GM10248 (cell line): ENCODE measurements at regions of chr10 and their contacts with region 1.

Region 1: DNA sequence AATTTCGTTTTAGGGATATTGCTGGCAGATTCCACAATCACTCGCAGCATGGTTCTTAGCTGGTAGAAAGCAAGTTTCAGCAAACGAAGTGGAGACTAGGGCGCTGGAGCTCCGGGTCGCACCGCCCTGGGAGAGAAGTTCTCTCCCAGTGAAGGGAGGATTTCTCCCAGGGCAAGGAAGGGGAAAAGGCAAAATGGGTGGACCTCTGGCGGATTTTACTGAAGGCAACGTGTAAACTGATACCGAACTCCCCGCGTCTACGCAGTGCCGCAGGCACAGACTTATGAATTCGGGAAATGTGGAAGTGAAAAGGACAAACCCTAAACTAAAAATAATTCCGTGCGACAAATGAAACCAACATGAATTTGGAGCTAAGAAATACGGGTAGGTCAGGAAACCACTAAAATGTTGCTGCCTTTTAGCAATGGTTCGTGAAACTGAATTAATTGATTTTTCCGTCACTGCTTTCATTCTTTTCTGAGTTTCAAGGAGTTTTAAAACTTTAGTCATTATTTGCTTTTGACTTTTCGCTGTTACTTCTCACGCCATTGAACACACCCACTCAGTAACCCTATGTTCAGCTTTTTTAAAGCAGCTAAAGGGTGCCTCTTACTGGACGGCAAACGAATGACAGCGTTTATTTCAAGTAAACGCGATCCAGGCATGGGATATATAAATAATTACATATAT is at the start of gene MYOF:
- DNase-seq: peak; percentile 70
- CTCF ChIP-seq: peak; percentile 63

Region 2: DNA sequence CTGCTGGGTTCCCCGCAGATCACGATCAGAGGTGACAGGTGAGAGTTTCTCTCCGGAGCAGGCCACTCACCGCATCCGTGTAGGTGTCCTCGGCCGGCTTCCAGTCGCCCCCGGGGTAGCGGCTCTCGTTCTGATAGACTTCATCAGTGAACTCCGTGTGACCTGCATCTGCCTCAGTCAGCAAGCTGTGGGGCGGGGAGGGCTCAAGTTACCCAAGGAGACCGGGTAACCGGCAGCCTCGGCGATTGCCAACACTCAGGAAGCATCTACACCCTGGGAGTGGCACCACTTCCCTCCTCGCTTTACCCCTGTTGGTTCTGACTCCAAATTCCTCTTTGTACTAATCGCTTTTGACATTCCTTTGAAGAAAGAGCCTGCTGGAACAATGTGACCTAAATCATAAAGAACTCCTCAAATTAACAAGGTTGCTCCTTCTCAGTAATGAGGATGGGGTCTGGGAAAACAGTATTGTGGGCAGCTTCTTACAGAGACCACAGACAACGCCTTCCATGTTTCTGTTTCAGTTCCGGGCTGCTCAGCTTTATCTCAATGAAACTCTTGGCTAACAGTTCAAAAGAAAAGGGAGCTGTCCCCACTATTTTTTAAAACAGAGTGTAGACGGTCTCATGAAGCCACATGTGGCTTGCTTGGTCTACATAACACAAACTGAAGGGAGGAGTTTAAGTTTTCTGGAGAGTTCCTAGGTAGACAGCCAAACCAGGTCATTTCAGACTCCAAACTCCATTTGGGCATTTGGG is 118.2 kb before region 1 on chr10:
- CTCF ChIA-PET with region 1: interaction called, 17 read pairs
- POLR2A ChIA-PET with region 1: no interaction called
- DNase-seq: no peak
- CTCF ChIP-seq: no peak

Region 3: DNA sequence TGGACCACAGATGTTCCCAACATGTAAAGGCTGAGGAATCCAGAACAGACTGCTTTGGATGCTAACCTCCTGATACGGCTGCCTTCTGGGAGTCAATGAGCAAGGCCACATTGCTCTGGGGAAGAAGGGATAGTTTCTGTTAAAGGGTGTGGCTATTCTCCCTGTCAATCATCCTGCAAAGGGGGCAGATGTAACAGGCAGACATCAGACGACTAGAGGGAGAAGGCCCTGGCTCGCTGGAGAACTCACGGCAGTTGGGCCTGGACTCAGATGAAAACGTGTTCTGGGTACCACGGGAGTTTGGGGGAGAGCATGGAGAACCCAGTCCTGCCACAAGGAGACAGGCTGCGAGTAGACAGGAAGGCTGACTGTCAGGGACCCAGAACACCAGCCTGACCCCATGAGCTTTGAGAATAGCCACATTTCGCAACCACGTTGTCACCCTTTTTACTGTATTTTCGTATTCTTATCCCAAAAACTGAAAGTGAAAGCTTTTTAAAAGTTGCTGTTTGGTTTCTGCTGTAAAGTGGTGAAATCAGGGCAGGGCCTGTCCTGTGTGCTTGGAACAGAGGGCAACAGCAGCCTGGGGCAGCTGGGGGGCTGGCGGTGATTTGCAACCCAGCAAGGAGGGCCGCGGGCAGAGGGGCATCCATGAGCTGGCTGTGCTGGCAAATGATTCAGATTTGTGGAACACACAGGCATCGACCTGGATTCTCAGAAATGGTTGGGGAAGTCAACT is 95.5 kb before region 1 on chr10:
- CTCF ChIA-PET with region 1: interaction called, 18 read pairs
- POLR2A ChIA-PET with region 1: no interaction called
- DNase-seq: peak; percentile 21
- CTCF ChIP-seq: no peak

Region 4: GRCh38 chr10:93471110-93471651 is 11.1 kb before region 1 on chr10:
- CTCF ChIA-PET with region 1: interaction called, 39 read pairs
- POLR2A ChIA-PET with region 1: no interaction called
- DNase-seq: no peak
- CTCF ChIP-seq: no peak

Region 5: DNA sequence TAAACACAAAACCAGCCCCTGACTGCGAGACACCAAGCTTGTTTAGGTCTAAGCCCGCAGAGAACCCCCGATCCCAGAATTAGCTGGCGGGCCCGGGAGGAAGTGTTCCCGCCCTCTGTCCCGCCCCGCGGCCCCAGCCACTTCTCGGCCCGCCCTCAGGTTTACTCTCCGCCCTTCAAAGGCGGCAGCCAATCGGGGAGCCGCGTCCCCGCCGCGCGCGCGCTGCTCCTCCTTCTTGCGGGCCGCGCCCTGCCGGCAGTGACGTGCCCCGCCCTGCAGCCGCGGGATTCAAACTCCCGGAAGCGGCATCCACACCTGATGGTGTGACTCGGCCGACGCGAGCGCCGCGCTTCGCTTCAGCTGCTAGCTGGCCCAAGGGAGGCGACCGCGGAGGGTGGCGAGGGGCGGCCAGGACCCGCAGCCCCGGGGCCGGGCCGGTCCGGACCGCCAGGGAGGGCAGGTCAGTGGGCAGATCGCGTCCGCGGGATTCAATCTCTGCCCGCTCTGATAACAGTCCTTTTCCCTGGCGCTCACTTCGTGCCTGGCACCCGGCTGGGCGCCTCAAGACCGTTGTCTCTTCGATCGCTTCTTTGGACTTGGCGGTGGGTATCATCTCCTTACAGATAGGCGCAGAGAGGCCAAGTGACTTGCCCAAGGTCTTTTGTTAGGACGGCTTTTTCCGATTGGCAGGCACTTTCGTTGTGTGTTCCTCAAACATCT is 14.2 kb after region 1 on chr10 and contains the start of gene CEP55:
- CTCF ChIA-PET with region 1: interaction called, 24 read pairs
- POLR2A ChIA-PET with region 1: no interaction called
- DNase-seq: peak; percentile 96
- CTCF ChIP-seq: no peak

Region 6: DNA sequence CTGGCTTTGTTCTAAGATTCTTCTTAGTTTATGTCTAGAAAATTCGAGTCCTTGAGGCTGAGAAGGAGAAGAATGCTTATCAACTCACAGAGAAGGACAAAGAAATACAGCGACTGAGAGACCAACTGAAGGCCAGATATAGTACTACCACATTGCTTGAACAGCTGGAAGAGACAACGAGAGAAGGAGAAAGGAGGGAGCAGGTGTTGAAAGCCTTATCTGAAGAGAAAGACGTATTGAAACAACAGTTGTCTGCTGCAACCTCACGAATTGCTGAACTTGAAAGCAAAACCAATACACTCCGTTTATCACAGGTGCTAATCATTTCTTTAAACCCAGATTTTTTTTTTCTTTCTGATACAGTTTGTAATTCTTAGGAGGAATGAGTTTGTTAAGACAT is 20.8 kb after region 1 on chr10:
- CTCF ChIA-PET with region 1: interaction called, 38 read pairs
- POLR2A ChIA-PET with region 1: no interaction called
- DNase-seq: peak; percentile 25
- CTCF ChIP-seq: no peak

Region 7: DNA sequence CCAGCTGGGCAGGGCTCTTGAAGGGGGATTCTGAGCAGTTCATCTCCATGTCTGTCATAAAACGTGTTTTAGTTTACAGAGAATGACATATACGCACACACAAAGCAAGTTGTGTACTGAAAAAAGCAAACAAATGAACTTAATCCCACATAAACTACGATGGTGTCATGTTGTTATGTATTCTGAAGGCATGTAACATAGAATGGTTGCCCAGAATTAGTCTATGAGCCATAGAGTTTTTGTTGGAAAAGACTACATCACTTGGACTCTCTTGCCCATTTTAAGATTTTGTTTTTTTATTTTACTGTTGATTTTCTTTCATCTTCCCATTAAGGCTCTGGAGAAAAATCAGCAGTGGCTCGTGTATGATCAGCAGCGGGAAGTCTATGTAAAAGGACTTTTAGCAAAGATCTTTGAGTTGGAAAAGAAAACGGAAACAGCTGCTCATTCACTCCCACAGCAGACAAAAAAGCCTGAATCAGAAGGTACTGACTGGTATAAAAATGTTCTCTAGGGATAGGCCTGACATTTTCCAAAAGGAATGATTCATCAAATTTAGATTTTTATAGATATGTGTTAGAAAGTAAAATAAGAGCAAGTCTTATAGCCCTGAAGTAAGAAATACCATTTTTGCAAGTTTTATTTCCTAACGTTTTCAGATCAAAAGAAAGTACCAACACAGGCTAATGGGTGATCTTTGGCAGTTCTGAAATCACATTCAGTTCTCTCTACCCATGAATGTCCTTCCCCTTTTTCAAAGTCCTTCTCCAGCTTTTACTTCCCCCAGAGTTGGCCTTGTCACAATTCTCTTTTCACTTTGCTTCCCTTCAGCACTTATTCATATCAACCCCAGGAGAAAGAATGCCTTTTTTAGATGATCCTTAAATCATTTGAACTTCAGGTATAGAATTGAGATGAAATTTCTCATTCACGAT is 33.0 kb after region 1 on chr10:
- CTCF ChIA-PET with region 1: interaction called, 11 read pairs
- POLR2A ChIA-PET with region 1: no interaction called
- DNase-seq: no peak
- CTCF ChIP-seq: no peak